T-cell (primary cell): ENCODE measurements at regions of chr11 and their contacts with region 1.

Region 1: DNA sequence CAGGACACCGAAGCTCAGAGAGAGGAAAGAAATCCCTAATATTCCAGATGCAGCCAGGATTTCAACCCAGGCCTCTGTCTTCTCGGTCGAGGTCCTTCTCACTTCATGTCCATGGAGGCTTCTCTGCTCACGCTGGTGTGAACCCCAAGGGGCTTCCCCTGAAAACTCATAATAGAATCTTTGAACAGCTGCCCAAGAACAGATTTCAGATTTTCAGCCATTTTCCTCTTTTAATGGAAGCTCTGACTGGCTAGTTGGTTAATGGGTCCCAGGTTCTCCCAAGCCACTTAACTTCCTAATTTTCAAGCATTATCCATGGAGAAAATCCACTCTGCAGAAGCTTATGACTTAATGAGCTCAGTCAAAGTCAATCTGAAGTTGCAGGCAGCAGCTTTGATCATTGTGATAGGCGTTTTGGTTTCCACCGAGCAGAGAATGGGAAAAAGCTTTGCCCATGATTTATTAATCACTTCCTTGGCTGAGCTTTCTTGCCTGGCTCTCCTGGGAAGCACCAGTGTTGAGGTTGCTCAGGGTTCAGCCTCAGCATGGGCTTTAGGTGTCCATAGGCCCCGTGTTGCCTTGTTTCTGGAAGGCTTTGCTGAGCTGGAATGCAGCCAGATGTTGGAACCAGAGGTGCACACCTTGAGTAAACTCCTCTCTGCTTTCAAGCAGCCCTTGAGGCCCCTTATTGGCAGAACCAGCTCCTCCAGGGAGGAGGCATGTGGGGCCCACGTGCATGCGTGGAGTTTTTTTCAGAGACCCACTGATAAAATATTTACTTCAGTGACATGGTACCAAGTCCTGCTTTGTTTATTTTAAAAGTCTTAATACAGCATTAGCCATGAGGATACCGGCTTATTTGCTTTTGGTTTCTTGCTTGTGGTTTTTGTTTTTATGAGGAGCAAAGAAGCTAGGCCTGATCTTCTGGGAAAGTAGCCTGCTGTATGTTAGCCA is 25.5 kb downstream of the LDLRAD3 start:
- DNase-seq: no peak
- ATAC-seq: no peak
- H3K4me3 ChIP-seq: no peak overlapping the region
- H3K4me3 Mint-ChIP-seq: no peak overlapping the region
- H3K27ac ChIP-seq: no peak overlapping the region
- H3K27ac Mint-ChIP-seq: no peak overlapping the region
- H3K4me1 ChIP-seq: no peaks in the 10 kb centered on the region
- H3K4me1 Mint-ChIP-seq: no peaks in the 10 kb centered on the region
- H3K27me3 ChIP-seq: peaks cover 0 to 3% of the 10 kb centered on the region in 2 experiments
- H3K27me3 Mint-ChIP-seq: peaks cover 1 to 12% of the 10 kb centered on the region in 2 donors

Region 2: GRCh38 chr11:34916015-34916842 is 1053.1 kb before region 1 on chr11 and contains the starts of genes APIP and PDHX:
- CTCF ChIA-PET with region 1: no interaction called
- POLR2A ChIA-PET with region 1: no interaction called
- DNase-seq: peak; percentile 81 to 97 (median 93)
- ATAC-seq: peak; percentile 83 to 91 (median 88)
- H3K4me3 ChIP-seq: peak within 1 kb of the TSS; percentile 78 to 95
- H3K4me3 Mint-ChIP-seq: peak within 1 kb of the TSS; percentile 94 to 97 (median 96)
- H3K27ac ChIP-seq: peak within 1 kb of the TSS; percentile 91
- H3K27ac Mint-ChIP-seq: peak within 1 kb of the TSS; percentile 93 to 97
- H3K4me1 ChIP-seq: peaks cover 8 to 25% of the 10 kb centered on the region in 2 experiments
- H3K4me1 Mint-ChIP-seq: peaks cover 51 to 74% (median 51%) of the 10 kb centered on the region in 3 donors
- H3K27me3 ChIP-seq: no peaks in the 10 kb centered on the region
- H3K27me3 Mint-ChIP-seq: no peaks in the 10 kb centered on the region
- total RNA-seq, gene APIP: 9.4 to 15.7 (median 15.6) TPM
- total RNA-seq, gene PDHX: 21.7 to 36.4 (median 26.1) TPM

Region 3: DNA sequence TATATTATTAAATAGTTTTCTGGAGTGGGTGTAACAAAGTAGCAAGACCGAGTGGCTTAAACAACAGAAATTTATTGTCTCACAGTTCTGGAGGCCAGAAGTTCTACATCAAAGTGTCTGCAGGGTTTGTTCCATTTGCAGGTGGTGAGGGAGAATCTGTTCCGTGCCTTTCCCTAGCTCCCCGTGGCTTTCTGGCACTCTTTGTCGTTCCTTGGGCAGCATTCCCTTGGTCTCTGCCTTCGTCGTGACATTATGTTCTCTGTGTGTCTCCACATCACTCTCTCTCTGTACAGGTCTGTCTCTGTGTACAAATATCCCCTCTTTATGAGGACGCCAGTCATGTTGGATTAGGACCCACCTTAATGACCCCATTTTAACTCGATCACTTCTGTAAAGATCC is 12.7 kb after region 1 on chr11:
- CTCF ChIA-PET with region 1: interaction called in 1 of 2 experiments, 12 read pairs
- POLR2A ChIA-PET with region 1: no interaction called
- DNase-seq: no peak
- ATAC-seq: no peak
- H3K4me3 ChIP-seq: no peak overlapping the region
- H3K4me3 Mint-ChIP-seq: no peak overlapping the region
- H3K27ac ChIP-seq: no peak overlapping the region
- H3K27ac Mint-ChIP-seq: no peak overlapping the region
- H3K4me1 ChIP-seq: no peaks in the 10 kb centered on the region
- H3K4me1 Mint-ChIP-seq: no peaks in the 10 kb centered on the region
- H3K27me3 ChIP-seq: no peaks in the 10 kb centered on the region
- H3K27me3 Mint-ChIP-seq: peaks cover 6 to 9% of the 10 kb centered on the region in 2 donors

Region 4: DNA sequence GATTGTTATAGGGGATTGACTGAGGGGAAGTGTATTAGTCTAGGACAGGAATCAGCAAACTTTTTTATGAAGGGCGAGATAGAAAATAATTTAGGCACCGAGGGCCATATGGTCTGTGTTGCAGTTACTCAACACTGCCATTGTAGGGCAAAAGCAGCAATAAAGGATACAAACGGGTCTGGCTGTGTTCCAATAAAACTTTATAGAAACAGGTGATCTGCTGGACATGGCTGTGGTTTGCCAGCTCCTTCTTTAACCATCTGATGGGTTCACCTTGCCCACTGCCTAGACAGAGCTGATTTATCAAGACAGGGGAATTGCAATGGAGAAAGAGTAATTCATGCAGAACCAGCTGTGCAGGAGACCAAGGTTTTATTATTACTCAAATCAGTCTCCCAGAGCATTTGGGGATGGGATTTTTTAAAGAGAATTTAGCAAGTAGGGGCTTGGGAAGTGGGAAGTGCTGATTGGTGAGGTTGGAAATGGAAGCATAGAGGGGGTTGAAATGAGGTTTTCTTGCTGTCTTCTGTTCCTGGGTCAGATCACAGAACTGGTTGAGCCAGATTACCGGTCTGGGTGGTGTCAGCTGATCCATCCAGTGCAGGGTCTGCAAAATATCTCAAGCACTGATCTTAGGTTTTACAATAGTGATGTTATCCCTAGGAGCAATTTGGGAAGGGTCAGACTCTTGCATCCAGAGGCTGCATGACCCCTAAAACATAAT is 346.8 kb after region 1 on chr11:
- CTCF ChIA-PET with region 1: no interaction called
- POLR2A ChIA-PET with region 1: no interaction called
- DNase-seq: no peak
- ATAC-seq: no peak
- H3K4me3 ChIP-seq: no peak overlapping the region
- H3K4me3 Mint-ChIP-seq: no peak overlapping the region
- H3K27ac ChIP-seq: no peak overlapping the region
- H3K27ac Mint-ChIP-seq: no peak overlapping the region
- H3K4me1 ChIP-seq: no peaks in the 10 kb centered on the region
- H3K4me1 Mint-ChIP-seq: peaks cover 0 to 2% (median 0%) of the 10 kb centered on the region in 3 donors
- H3K27me3 ChIP-seq: no peaks in the 10 kb centered on the region
- H3K27me3 Mint-ChIP-seq: peaks cover 13 to 28% of the 10 kb centered on the region in 2 donors